Sigmoid colon (tissue), 7 donors: ENCODE measurements at regions of chr7 and their contacts with region 1.

Region 1: GRCh38 chr7:4797858-4798705 is 22.7 kb downstream of the AP5Z1 start:
- DNase-seq: no peak
- H3K4me3 ChIP-seq: no peak overlapping the region
- H3K27ac ChIP-seq: no peak overlapping the region
- H3K4me1 ChIP-seq: peaks cover 0 to 6% (median 4%) of the 10 kb centered on the region in 4 donors
- H3K27me3 ChIP-seq: no peaks in the 10 kb centered on the region
- CTCF ChIP-seq: peak; percentile 50 to 88 (median 62)
- EP300 ChIP-seq: no peak
- POLR2A ChIP-seq: no peak

Region 2: DNA sequence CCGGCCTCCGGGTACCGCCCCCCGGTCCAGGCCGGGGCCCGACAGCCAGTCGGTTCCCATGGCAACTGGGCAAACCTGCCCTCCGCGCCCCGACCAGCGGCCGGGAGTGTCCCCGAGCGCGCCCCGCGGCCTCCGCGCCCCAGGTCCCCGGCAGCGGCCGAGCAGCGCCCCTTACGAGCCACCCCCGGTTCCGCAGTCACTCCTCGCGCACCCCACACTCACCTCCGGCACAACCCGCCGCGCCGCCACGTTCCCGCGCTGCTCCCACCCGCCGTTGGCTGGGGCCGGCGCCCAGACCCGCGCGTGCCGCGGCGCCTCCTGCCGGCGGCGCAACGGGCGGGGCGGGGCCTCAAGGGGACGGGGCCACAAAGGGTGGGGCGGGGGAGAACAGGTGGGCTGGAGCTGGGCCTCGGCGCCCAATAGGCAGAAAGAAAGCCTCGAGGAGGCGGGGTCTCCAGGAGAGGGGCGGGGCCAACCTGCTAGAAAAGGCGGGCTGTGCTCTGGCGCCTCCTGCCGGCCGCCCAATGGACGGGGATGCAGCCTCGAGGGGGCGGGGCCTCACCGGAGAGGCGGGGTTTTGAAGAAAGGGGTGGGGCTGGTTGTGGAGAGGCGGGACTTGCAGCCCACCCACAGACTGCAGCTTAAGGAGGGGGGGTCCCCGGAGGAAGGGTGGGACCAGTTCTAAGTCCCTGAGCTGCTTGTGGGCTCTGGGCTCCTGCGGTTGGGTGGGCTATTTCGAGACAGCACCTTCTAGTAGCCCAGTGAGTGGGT is 85.5 kb after region 1 on chr7 and contains the start of gene RADIL:
- intact Hi-C with region 1: loop called (anchors 2 kb)
- DNase-seq: peak; percentile 97
- H3K4me3 ChIP-seq: peak within 1 kb of the TSS; percentile 37 to 82 (median 76)
- H3K27ac ChIP-seq: peak within 1 kb of the TSS; percentile 67 to 82 (median 79)
- H3K4me1 ChIP-seq: peaks cover 0 to 33% (median 22%) of the 10 kb centered on the region in 4 donors
- H3K27me3 ChIP-seq: peaks cover 0 to 11% (median 8%) of the 10 kb centered on the region in 3 donors
- CTCF ChIP-seq: peak; percentile 50 to 75 (median 60)
- EP300 ChIP-seq: no peak
- POLR2A ChIP-seq: no peak
- total RNA-seq, gene RADIL: 5.6 to 10.8 (median 6.7) TPM

Region 3: GRCh38 chr7:5083311-5083711 is 285.2 kb after region 1 on chr7:
- intact Hi-C with region 1: loop called (anchors 2 kb)
- DNase-seq: no peak
- H3K4me3 ChIP-seq: no peak overlapping the region
- H3K27ac ChIP-seq: no peak overlapping the region
- H3K4me1 ChIP-seq: peaks cover 0 to 6% (median 2%) of the 10 kb centered on the region in 4 donors
- H3K27me3 ChIP-seq: peaks cover 0 to 21% (median 6%) of the 10 kb centered on the region in 3 donors
- CTCF ChIP-seq: no peak
- EP300 ChIP-seq: no peak
- POLR2A ChIP-seq: no peak